IMR-90 (cell line): ENCODE measurements at regions of chr2 and their contacts with region 1.

Region 1: GRCh38 chr2:173545364-173545763 is 190.7 kb downstream of the CDCA7 start:
- DNase-seq: peak; percentile 2
- ATAC-seq: no peak
- H3K4me3 ChIP-seq: no peak overlapping the region
- H3K27ac ChIP-seq: no peak overlapping the region
- H3K4me1 ChIP-seq: no peaks in the 10 kb centered on the region
- H3K27me3 ChIP-seq: peaks cover 11% of the 10 kb centered on the region
- CTCF ChIP-seq: no peak
- POLR2A ChIP-seq: no peak
- RAD21 ChIP-seq: no peak

Region 2: GRCh38 chr2:174312581-174313234 is 767.3 kb after region 1 on chr2:
- CTCF ChIA-PET with region 1: interaction called, 13 read pairs
- POLR2A ChIA-PET with region 1: no interaction called
- dilution Hi-C with region 1: no loop called
- in situ Hi-C with region 1: no loop called
- intact Hi-C with region 1: no loop called
- DNase-seq: no peak
- ATAC-seq: no peak
- H3K4me3 ChIP-seq: no peak overlapping the region
- H3K27ac ChIP-seq: no peak overlapping the region
- H3K4me1 ChIP-seq: no peaks in the 10 kb centered on the region
- H3K27me3 ChIP-seq: peaks cover 40% of the 10 kb centered on the region
- CTCF ChIP-seq: no peak
- POLR2A ChIP-seq: no peak
- RAD21 ChIP-seq: no peak